CD14-positive monocyte (primary cell): ENCODE measurements at regions of chr3 and their contacts with region 1.

Region 1: DNA sequence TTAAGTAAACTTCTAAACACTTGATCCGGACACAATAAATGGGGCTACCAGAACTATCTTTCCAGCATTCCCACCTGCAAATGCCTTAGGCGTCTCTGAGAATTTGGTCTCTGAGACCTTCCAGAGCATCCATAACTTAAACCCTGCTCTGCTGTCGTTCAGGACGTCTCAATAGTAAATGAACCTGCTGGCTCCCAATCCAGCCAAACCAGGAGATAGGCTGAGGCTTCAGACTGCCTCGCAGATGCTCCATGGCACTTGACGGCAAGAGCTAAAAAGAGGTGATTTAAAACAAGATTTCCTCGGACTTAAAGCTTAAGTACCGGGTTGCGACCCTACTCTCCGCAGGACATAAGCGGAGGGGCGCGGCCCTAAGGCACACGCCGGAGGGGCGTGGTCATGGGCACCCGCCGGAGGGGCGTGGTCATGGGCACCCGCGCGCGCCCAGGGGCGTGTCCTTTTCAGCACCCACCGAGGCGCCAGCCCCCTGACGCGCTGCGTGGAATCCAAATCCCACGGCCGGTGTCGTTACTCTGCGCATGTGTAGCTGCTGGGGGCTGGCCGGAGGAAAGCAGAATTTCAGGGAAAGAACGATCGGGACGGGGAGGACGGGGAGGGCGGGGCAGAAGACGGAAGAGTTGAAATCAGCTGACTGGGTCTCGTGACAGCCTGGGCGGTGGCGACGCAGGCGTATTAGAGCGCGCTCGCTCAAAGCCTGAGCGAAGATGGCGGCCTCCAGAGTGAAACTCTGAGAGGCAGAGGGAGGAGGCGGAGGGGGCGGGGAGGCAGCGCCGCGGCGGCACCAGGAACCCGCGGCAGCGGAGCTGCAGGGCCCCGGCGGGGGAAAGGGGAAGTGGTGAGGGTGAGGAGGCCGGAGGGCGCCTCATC is at the start of gene DNAJC13:
- DNase-seq: peak; percentile 97 to 98 (median 97)
- H3K4me3 ChIP-seq: peak within 1 kb of the TSS; percentile 72 to 90 (median 85)
- H3K4me3 Mint-ChIP-seq: peak within 1 kb of the TSS; percentile 96 to 100
- H3K27ac ChIP-seq: peak within 1 kb of the TSS; percentile 86 to 91
- H3K27ac Mint-ChIP-seq: peak within 1 kb of the TSS; percentile 97 to 99 (median 99)
- H3K4me1 ChIP-seq: peaks cover 22 to 36% of the 10 kb centered on the region in 2 donors
- H3K4me1 Mint-ChIP-seq: peaks cover 32% of the 10 kb centered on the region
- H3K27me3 ChIP-seq: no peaks in the 10 kb centered on the region
- H3K27me3 Mint-ChIP-seq: peaks cover 0 to 2% (median 0%) of the 10 kb centered on the region in 3 donors
- CTCF ChIP-seq: no peak
- polyA plus RNA-seq, gene DNAJC13: 18.7 to 32.3 (median 20.8) TPM

Region 2: GRCh38 chr3:130746246-130747039 is 1670.6 kb before region 1 on chr3 and contains the start of gene PIK3R4:
- intact Hi-C with region 1: loop called in 1 of 2 experiments (anchors 10 kb)
- DNase-seq: peak; percentile 98 to 99 (median 98)
- H3K4me3 ChIP-seq: peak within 1 kb of the TSS; percentile 86 to 90 (median 87)
- H3K4me3 Mint-ChIP-seq: peak within 1 kb of the TSS; percentile 92 to 96
- H3K27ac ChIP-seq: peak within 1 kb of the TSS; percentile 82 to 97
- H3K27ac Mint-ChIP-seq: peak within 1 kb of the TSS; percentile 96 to 99 (median 97)
- H3K4me1 ChIP-seq: peaks cover 11 to 14% of the 10 kb centered on the region in 2 donors
- H3K4me1 Mint-ChIP-seq: peaks cover 40% of the 10 kb centered on the region
- H3K27me3 ChIP-seq: no peaks in the 10 kb centered on the region
- H3K27me3 Mint-ChIP-seq: peaks cover 0 to 2% (median 0%) of the 10 kb centered on the region in 3 donors
- CTCF ChIP-seq: no peak
- polyA plus RNA-seq, gene PIK3R4: 6.5 to 18.7 (median 10.1) TPM